ENCODE measurements at regions of chr22 and their contacts with region 1.

Region 1: DNA sequence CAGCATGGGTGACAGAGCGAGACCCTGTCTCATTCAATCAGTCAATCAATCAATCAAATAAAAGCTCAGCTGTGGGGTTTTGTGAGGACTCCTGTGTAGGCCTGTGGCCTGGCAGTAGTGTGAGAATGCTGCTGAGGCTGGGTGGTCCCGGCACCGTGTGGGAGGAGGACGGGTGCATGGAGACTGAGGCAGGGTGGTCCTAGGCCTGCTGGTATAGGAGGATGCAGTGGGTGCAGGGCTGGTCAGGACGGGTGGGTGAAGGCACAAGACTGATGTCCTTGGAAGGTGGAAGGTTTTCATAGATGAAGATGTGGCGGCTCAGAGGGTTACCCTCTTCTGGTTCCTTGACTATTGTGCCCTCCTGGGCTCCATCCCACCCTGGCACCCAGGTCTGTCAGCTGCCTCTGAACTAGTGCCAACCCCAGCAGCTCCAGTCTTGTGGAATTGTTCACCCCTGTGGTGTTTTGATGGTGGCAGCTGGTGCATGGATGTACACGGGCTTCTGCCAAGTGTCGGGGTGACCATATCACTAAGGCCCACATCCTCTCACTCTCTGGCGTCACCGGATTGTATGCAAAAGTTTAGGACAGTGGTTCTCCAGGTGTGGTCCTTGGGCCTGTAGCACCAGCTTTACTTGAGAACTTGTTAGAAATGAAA is 23.7 kb downstream of the TANGO2 start:
- DNase-seq: no peak
- ATAC-seq: no peak

Region 2: GRCh38 chr22:20000169-20000621 is 44.4 kb before region 1 on chr22:
- intact Hi-C with region 1: no loop called
- DNase-seq: no peak
- ATAC-seq: peak; percentile 16

Region 3: DNA sequence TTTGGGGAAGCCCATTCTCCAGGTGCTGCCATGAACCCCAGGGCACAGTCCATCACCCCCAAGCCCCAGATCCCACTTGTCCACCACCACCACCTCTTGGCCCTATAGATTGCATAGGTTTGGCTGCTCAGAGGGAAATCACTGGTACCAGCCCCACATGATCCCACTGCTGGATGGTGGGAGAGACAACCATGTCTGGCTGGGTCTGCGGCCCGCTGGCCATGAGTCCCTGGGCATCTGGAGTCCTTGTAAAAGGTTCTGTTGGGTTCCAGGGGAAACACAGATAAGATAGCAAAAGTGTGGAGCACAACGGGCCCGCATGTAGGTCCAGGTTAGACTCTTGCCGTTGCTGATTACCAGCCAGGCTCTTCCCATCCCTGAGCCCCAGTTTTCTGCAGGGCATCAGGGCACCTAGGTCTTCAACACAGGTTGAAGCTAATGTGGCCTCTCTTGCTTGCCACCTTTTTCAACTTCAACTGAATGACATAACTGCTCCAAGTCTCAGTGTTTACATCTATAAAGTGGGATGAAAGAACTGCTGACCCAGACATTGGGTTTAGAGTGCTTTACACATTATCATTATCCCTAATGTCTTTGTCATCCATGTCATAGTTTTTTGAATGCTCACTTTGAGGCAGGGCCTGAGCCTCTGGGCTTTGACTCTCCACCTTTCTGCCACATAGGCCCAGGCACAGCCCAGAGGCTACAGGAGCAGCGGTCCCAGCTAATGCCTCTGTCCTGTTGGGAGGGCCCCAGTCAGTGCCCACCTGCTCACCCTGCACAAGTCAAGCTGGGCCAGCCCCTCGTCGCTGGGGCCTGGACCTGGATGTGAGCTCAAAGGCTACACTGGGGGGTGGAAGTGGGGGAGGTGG is 24.7 kb before region 1 on chr22:
- intact Hi-C with region 1: loop called (anchors 2 kb)
- DNase-seq: no peak
- ATAC-seq: no peak

Region 4: GRCh38 chr22:20243537-20244249 is 199.1 kb after region 1 on chr22:
- intact Hi-C with region 1: no loop called
- DNase-seq: no peak
- ATAC-seq: peak; percentile 67